IMR-90 (cell line): ENCODE measurements at regions of chr7 and their contacts with region 1.

Region 1: DNA sequence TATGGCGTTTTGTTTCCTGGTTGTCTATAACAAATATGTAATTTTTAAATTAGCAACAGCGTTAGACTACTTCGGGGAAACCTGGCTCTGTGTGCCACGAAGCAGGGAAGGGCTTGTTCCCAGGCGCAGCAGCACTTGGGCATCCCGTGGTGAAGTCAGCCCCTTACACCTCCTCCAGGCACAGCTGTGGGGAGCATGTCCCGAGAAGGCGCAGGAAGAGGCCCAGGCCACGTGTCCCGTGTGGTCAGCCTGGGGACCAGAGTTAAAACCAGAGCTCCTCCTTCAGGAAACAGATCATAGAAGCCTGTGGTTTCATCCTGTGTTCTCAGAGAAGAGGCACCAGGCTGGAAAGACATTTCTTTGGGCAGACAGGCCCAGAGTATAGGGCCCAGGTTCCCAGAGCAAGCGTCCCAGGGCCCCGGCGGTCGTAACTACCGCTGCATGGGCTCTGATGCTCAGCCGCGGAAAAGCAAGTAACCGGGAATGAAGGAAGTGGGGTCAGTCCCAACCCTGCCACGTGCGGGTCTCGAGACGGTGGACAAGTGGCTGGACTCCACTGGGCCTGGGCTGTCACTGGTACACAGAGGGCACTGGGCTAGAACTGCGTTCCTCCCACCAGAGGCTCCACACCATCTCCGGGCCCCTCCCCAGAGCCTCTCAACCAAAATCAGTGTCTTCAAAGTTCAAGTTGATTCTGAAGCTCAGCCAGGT is 7.1 kb downstream of the NUDT1 start:
- DNase-seq: peak; percentile 97
- ATAC-seq: peak; percentile 95
- H3K4me3 ChIP-seq: no peak overlapping the region
- H3K27ac ChIP-seq: peak overlapping the region; percentile 76
- H3K4me1 ChIP-seq: peaks cover 16% of the 10 kb centered on the region
- H3K27me3 ChIP-seq: no peaks in the 10 kb centered on the region
- CTCF ChIP-seq: peak; percentile 39
- POLR2A ChIP-seq: peak; percentile 41; the same call in 1 of the 2 replicates
- RAD21 ChIP-seq: peak; percentile 45

Region 2: DNA sequence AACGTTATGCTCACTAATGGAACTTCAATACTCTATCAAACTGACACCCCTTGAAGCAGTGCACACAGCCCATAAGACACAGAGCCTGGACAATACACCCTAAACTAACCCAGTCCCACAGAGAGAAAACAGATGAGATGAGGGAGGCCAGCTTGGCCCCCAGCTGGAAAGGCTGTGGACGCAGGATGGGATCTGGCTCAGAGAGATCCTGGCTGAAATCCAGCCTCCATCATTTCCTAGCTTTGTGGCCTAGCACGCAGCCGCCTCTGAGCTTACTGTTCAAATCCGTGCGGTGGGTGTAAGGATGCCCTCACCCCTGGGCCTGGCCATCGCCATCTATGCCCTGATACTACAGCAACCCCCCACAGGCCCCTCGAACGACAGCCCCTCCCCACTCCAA is 32.4 kb after region 1 on chr7:
- CTCF ChIA-PET with region 1: no interaction called
- POLR2A ChIA-PET with region 1: interaction called, 10 read pairs
- dilution Hi-C with region 1: no loop called
- in situ Hi-C with region 1: no loop called
- intact Hi-C with region 1: no loop called
- DNase-seq: peak; percentile 55
- ATAC-seq: peak; percentile 69
- H3K4me3 ChIP-seq: no peak overlapping the region
- H3K27ac ChIP-seq: no peak overlapping the region
- H3K4me1 ChIP-seq: peaks cover 7% of the 10 kb centered on the region; the same call in 1 of the 2 replicates
- H3K27me3 ChIP-seq: no peaks in the 10 kb centered on the region
- CTCF ChIP-seq: no peak
- POLR2A ChIP-seq: no peak
- RAD21 ChIP-seq: no peak

Region 3: GRCh38 chr7:2314209-2314955 is 65.2 kb after region 1 on chr7 and contains the start of gene SNX8:
- CTCF ChIA-PET with region 1: interaction called, 3 read pairs
- POLR2A ChIA-PET with region 1: no interaction called
- dilution Hi-C with region 1: no loop called
- in situ Hi-C with region 1: no loop called
- intact Hi-C with region 1: loop called (anchors 5 kb)
- DNase-seq: peak; percentile 79
- ATAC-seq: peak; percentile 98
- H3K4me3 ChIP-seq: peak within 1 kb of the TSS; percentile 85
- H3K27ac ChIP-seq: peak within 1 kb of the TSS; percentile 61
- H3K4me1 ChIP-seq: peaks cover 4% of the 10 kb centered on the region; the same call in 1 of the 2 replicates
- H3K27me3 ChIP-seq: peaks cover 2% of the 10 kb centered on the region; the same call in 1 of the 2 replicates
- CTCF ChIP-seq: no peak
- POLR2A ChIP-seq: peak; percentile 82
- RAD21 ChIP-seq: no peak
- total RNA-seq, gene SNX8: 7.7 and 8.6 TPM in 2 replicates

Region 4: DNA sequence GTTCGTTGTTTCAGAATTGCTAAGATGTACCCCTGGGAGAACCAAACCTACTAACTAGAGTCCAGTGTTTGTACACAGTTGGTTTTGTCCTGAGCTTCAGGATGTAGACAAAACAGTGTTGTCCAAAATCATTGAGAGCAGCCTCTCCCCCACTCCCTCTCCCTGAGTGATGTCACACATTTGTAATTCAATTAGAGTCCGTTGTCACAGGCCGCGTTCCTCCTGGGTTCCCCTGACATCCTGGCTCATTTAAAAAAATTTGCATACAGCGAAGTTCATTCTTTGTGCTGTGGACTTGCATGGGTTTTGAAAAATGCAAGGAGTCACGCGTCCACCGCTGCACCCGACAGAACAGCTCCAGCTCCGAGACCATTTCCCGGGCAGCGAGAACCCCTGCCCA is 216.8 kb after region 1 on chr7:
- CTCF ChIA-PET with region 1: no interaction called
- POLR2A ChIA-PET with region 1: no interaction called
- dilution Hi-C with region 1: no loop called
- in situ Hi-C with region 1: no loop called
- intact Hi-C with region 1: loop called (anchors 5 kb)
- DNase-seq: no peak
- ATAC-seq: no peak
- H3K4me3 ChIP-seq: no peak overlapping the region
- H3K27ac ChIP-seq: no peak overlapping the region
- H3K4me1 ChIP-seq: no peaks in the 10 kb centered on the region
- H3K27me3 ChIP-seq: peaks cover 3% of the 10 kb centered on the region; the same call in 1 of the 2 replicates
- CTCF ChIP-seq: no peak
- POLR2A ChIP-seq: no peak
- RAD21 ChIP-seq: no peak